Activated CD4-positive, alpha-beta memory T cell treated with anti-CD3 and anti-CD28 coated beads for 36 hours (primary cell): ENCODE measurements at regions of chr12 and their contacts with region 1.

Region 1: GRCh38 chr12:82685790-82686167 is 927 bp upstream of the TMTC2 start:
- DNase-seq: peak; percentile 95
- H3K4me3 Mint-ChIP-seq: peak overlapping the region; percentile 86
- H3K27ac Mint-ChIP-seq: peak overlapping the region; percentile 75
- H3K4me1 Mint-ChIP-seq: peaks cover 9% of the 10 kb centered on the region
- H3K27me3 Mint-ChIP-seq: peaks cover 5% of the 10 kb centered on the region

Region 2: DNA sequence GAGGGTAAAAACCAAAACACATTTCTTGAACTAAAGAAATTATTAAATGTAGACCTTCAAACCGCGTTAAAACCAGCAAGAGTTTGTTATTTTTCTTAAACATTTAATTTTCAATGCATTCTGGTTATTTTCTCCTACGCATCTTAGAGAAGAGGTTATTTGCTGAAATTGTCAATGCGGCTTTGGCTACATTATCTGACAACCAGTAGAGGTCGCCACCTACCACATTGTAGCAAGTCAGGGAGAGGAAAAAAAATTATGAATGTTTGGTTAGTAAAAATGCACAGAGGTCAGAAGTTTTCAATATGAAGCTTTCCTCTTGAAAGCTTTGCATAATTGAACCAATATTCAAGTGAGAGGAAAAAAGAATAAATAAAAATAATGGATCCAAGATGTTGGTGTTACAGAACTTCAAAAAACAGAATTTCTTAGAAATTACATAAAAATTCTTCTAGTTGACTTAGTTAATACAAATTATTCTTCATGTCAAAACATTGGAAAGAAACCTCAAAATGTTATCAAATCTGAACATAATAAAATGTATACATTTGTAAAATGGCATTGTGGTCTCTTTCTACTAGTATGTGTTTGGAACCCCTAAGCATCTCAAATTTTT is 158.5 kb before region 1 on chr12:
- CTCF ChIA-PET with region 1: interaction called, 4 read pairs
- POLR2A ChIA-PET with region 1: no interaction called
- intact Hi-C with region 1: loop called (anchors 1 kb)
- DNase-seq: peak; percentile 11
- H3K4me3 Mint-ChIP-seq: no peak overlapping the region
- H3K27ac Mint-ChIP-seq: no peak overlapping the region
- H3K4me1 Mint-ChIP-seq: no peaks in the 10 kb centered on the region
- H3K27me3 Mint-ChIP-seq: peaks cover 2% of the 10 kb centered on the region

Region 3: DNA sequence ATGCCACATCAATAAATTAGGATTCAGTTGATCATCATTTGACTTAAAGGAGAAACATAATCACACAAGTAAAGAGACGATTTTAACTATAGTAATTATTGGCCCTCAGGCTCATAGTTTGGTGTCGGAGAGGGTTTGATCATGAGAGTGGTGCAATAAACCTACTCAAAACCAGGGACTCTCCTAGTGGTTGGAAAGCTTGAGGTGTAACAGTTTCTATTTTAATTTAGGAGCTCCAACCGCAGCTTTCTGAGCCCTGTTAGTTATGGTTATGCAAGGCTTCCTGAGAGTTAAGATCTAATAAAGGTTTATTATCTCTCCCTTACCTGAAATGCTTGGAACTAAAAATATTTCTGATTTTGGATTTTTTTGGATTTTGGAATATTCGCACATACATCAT is 37.3 kb after region 1 on chr12:
- CTCF ChIA-PET with region 1: interaction called, 10 read pairs
- POLR2A ChIA-PET with region 1: no interaction called
- intact Hi-C with region 1: loop called (anchors 1 kb)
- DNase-seq: peak; percentile 11
- H3K4me3 Mint-ChIP-seq: no peak overlapping the region
- H3K27ac Mint-ChIP-seq: no peak overlapping the region
- H3K4me1 Mint-ChIP-seq: peaks cover 5% of the 10 kb centered on the region
- H3K27me3 Mint-ChIP-seq: no peaks in the 10 kb centered on the region

Region 4: GRCh38 chr12:83121897-83122622 is 436.3 kb after region 1 on chr12:
- CTCF ChIA-PET with region 1: interaction called, 3 read pairs
- POLR2A ChIA-PET with region 1: no interaction called
- intact Hi-C with region 1: loop called (anchors 2 kb)
- DNase-seq: no peak
- H3K4me3 Mint-ChIP-seq: no peak overlapping the region
- H3K27ac Mint-ChIP-seq: no peak overlapping the region
- H3K4me1 Mint-ChIP-seq: peaks cover 10% of the 10 kb centered on the region
- H3K27me3 Mint-ChIP-seq: no peaks in the 10 kb centered on the region

Region 5: DNA sequence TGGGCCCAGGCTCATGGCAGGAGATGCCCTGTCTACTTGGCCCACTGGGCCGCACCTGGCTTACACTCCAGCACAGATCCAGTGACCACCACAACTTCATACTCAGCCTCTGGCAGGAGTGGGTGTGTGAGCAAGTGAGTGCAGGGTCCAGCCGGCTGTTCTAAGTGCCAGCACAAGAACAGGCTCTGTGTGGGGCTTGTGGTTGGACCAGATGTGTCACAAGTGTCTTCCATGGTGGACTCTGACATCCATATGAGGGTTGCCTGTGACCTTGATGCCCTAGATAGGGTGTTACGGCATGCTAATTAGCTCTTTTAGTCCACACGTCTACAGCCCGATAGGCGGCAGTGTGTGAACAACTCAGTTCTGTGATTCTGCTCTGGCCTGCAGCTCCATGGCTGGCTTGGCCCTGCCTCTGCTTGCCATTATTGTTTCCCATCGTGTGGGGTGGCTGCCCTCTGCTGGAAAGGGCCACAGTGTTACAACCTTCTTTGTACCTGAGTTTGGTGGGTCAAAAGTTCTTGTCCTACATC is 1137.7 kb after region 1 on chr12:
- CTCF ChIA-PET with region 1: interaction called, 17 read pairs
- POLR2A ChIA-PET with region 1: no interaction called
- intact Hi-C with region 1: loop called (anchors 1 kb)
- DNase-seq: peak; percentile 51
- H3K4me3 Mint-ChIP-seq: no peak overlapping the region
- H3K27ac Mint-ChIP-seq: no peak overlapping the region
- H3K4me1 Mint-ChIP-seq: no peaks in the 10 kb centered on the region
- H3K27me3 Mint-ChIP-seq: no peaks in the 10 kb centered on the region